Esophagus muscularis mucosa (tissue), 4 donors: ENCODE measurements at regions of chr1 and their contacts with region 1.

Region 1: DNA sequence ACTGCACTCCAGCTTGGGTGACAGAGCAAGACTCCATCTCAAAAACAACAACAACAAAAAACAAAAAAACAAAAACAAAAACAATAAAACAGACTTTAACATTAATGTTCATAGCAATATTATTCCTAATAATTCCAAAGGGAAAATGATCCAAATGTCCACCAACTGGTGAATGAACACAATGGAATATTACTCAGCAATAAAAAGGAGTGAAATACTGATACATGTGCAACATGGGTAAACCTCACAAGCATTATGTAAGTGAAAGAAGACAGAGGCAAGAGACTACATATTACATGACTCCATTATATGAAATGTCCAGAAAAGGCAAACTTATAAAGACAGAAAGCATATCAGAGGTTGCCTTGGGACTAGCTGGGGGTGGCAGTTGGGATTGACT is 6.1 kb upstream of the TTF2 start:
- DNase-seq: no peak
- H3K4me3 ChIP-seq: no peak overlapping the region
- H3K27ac ChIP-seq: no peak overlapping the region
- H3K4me1 ChIP-seq: peaks cover under 1 to 7% (median 2%) of the 10 kb centered on the region in 4 donors
- H3K27me3 ChIP-seq: no peaks in the 10 kb centered on the region
- CTCF ChIP-seq: no peak
- EP300 ChIP-seq: no peak
- POLR2A ChIP-seq: no peak

Region 2: DNA sequence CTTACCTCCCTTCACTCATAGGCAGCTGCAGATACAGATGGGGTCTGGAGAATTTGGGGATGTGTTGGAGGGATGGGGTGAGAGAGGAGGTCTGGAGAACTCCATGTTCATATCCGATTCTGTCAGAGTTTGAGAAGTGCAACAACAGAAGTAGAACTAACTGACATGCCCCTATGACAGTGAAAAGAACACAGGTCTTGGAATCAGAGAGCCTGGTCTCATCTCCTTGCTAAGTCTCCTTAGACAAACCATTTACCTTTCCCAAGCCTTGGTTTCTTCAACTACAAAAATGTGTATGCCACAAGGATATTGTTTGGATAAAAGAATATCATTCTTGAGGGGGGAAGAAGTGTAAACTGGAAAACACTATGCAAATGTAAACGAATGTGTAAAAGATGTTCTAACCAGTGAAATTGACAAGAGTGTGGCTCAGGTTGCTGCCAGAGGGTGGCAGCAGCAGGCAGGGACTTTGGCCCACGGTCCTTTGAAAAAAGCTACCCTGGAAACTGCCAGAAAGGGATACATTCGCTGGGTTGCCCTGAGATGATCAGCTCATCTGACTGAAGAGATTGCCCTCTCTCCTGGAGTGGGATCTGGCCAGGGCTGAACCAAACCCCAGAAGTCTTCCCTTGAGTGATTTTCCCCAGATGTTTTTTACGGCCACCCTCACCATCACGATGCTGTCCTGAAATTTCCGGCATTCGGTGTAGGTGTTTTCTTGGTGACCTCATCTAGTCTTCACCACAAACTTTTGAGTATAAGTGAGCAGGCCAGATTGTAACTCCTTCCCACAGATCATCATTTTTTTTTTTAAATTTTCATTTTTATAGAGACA is 316.8 kb before region 1 on chr1:
- intact Hi-C with region 1: loop called (anchors 2 kb)
- DNase-seq: no peak
- H3K4me3 ChIP-seq: no peak overlapping the region
- H3K27ac ChIP-seq: no peak overlapping the region
- H3K4me1 ChIP-seq: no peaks in the 10 kb centered on the region
- H3K27me3 ChIP-seq: no peaks in the 10 kb centered on the region
- CTCF ChIP-seq: peak; percentile 59 to 70 (median 66)
- EP300 ChIP-seq: no peak
- POLR2A ChIP-seq: no peak

Region 3: DNA sequence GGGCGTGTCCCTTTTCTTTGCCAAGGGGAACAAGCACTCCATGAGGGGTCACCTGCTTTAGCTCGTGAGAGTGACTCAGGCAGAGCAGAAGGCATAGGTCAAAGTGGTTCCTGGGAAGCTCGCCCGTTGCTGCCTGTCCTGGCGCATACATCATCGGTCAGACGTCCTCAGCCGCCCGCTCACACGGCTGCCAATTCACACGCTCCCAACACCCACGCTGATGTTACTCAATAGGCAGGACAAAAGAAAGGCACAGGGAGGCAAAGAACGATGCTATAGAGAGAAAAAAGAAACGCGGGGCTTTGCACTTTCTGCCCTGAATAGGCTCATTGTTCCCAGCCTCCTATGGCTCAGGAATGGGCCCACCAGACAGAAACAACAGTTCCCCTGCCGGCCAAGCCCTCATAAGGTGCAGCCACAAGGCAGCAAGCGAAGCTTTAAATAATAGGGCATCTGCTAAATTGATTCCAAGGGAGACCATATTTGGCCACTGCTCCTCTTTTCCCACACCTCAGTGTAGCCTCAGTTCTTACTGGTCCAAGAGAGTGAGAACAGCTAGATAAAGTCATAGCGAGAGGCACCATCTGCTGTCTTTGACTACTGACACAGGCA is 117.9 kb after region 1 on chr1:
- intact Hi-C with region 1: no loop called
- DNase-seq: no peak
- H3K4me3 ChIP-seq: no peak overlapping the region
- H3K27ac ChIP-seq: no peak overlapping the region
- H3K4me1 ChIP-seq: peaks cover 0 to 4% (median 0%) of the 10 kb centered on the region in 4 donors
- H3K27me3 ChIP-seq: no peaks in the 10 kb centered on the region
- CTCF ChIP-seq: no peak
- EP300 ChIP-seq: no peak
- POLR2A ChIP-seq: no peak

Region 4: DNA sequence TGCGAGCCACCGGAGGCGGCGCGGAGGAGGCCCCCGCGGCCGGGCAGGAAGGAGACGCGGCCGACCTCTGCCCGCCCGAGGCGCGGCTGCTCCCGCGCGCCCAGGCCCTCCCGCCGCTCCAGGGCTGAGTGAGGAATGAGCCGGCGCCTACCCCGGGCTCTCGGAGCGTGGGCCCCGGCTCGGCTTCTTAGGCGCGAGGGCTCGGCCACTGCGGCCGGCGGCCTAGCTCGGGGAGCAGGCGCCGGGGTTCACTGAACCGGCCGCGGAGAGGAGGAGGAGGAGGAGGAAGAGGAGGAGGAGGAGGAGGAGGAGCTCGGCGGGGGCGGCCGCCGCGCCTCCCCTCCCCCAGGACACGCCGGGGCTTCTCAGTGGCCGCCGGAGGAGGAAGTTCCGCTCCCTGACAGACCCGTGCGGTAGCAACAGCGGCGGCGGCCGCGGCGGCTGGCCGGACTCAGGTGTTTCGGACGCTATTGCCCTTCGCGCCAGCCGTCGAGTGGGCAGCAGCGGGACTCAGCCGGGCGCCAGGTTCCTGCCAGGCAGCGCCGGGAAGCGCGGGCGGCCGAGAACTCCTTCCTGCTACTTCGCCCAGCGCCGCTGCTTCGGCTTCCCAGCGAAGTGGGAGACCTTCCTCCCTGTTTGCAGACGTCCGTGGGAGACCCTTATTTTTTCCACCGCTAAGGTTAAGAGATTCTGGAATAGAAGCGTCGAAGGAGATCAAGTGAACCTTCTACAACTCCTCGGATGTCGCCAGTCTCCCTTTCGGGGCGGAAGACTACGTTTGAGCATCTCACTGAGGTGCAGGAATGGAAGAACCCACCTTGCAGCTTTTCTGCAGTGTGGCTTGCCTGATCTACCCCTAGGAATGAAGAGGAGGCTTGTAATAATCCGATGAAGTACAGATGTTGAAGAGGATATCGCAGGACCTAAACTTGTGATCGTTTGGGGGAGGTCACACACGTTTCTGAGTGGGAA is 313.3 kb after region 1 on chr1 and contains the start of gene MAN1A2:
- intact Hi-C with region 1: no loop called
- DNase-seq: peak; percentile 96
- H3K4me3 ChIP-seq: peak within 1 kb of the TSS; percentile 78 to 91 (median 86)
- H3K27ac ChIP-seq: peak within 1 kb of the TSS; percentile 91 to 99 (median 98)
- H3K4me1 ChIP-seq: peaks cover 32 to 67% (median 65%) of the 10 kb centered on the region in 4 donors
- H3K27me3 ChIP-seq: no peaks in the 10 kb centered on the region
- CTCF ChIP-seq: no peak
- EP300 ChIP-seq: no peak
- POLR2A ChIP-seq: no peak
- total RNA-seq, gene MAN1A2: 45.4 to 51.7 (median 48.3) TPM